ENCODE measurements at regions of chr4 and their contacts with region 1.

Region 1: GRCh38 chr4:184755278-184755677 is 21.4 kb upstream of the CENPU start:
- DNase-seq: no peak
- H3K4me3 ChIP-seq: no peak overlapping the region
- H3K27ac ChIP-seq: no peak overlapping the region
- H3K4me1 ChIP-seq: no peaks in the 10 kb centered on the region
- H3K27me3 ChIP-seq: no peaks in the 10 kb centered on the region
- CTCF ChIP-seq: no peak
- EP300 ChIP-seq: no peak
- POLR2A ChIP-seq: no peak

Region 2: GRCh38 chr4:184994010-184994622 is 238.8 kb after region 1 on chr4:
- intact Hi-C with region 1: loop called (anchors 10 kb)
- DNase-seq: no peak
- H3K4me3 ChIP-seq: no peak overlapping the region
- H3K27ac ChIP-seq: no peak overlapping the region
- H3K4me1 ChIP-seq: no peaks in the 10 kb centered on the region
- H3K27me3 ChIP-seq: peaks cover 0 to 17% (median 0%) of the 10 kb centered on the region in 3 donors
- CTCF ChIP-seq: no peak
- EP300 ChIP-seq: no peak
- POLR2A ChIP-seq: no peak

Measured in stomach (tissue), 19 donors.